ENCODE measurements at regions of chr16 and their contacts with region 1.

Region 1: GRCh38 chr16:24070851-24071250 is 185.3 kb upstream of the CACNG3 start:
- DNase-seq: no peak
- H3K4me3 ChIP-seq: no peak overlapping the region
- H3K27ac ChIP-seq: no peak overlapping the region
- H3K4me1 ChIP-seq: no peaks in the 10 kb centered on the region
- H3K27me3 ChIP-seq: peaks cover 18% of the 10 kb centered on the region
- CTCF ChIP-seq: peak; percentile 66

Region 2: DNA sequence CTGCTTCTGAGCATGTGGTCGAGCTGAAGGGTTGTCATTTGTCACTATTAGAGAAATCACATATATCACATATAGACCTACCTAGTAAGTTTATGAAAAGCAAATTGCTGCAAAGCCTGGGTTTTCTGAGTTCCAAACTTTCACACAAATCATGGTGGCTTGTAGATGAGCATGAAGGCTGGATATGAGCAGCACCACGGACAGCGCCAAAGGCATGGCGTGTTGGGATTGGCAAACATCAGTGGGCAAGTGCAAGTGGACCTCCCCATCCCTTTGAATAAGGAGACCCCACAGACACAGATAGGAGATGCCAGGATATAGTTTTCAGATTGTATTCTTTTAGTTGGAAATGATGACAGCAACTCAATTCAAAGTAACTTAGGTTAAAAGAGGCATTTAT is 107.6 kb after region 1 on chr16:
- intact Hi-C with region 1: no loop called
- DNase-seq: no peak
- H3K4me3 ChIP-seq: no peak overlapping the region
- H3K27ac ChIP-seq: no peak overlapping the region
- H3K4me1 ChIP-seq: no peaks in the 10 kb centered on the region
- H3K27me3 ChIP-seq: peaks cover 9% of the 10 kb centered on the region
- CTCF ChIP-seq: no peak

Region 3: DNA sequence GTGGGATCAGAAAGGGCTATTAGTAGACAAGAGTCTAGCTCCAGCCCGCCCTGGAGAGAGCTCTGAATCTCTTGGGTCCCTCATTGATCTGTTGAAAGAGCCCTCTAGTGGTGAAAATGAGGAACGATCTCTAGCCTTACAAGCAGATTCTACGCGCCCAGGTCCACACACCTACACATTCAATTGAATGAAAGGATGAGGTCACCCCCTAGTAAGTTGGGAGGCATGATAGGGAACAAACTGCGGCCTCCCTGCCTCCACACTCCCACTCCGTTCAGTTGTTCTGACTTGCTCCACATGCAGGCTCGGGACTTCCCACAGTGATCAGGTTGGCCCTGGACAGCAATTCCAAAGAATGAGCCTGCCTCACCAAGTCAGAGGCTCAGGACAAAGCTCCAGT is 182.3 kb after region 1 on chr16:
- intact Hi-C with region 1: loop called (anchors 10 kb)
- DNase-seq: no peak
- H3K4me3 ChIP-seq: no peak overlapping the region
- H3K27ac ChIP-seq: no peak overlapping the region
- H3K4me1 ChIP-seq: no peaks in the 10 kb centered on the region
- H3K27me3 ChIP-seq: peaks cover 75% of the 10 kb centered on the region
- CTCF ChIP-seq: peak; percentile 76